Tibial artery (tissue), 4 donors: ENCODE measurements at regions of chr9 and their contacts with region 1.

Region 1: GRCh38 chr9:113993838-113994540 is 84.1 kb downstream of the AMBP start:
- DNase-seq: peak; percentile 88 to 96
- H3K4me3 ChIP-seq: no peak overlapping the region
- H3K27ac ChIP-seq: peak overlapping the region in 1 of 2 donors; percentile 21
- H3K4me1 ChIP-seq: peaks cover 3 to 79% (median 53%) of the 10 kb centered on the region in 4 donors
- H3K27me3 ChIP-seq: no peaks in the 10 kb centered on the region
- CTCF ChIP-seq: no peak

Region 2: GRCh38 chr9:113876151-113876992 is 117.6 kb before region 1 on chr9 and contains the start of gene ZNF618:
- intact Hi-C with region 1: loop called (anchors 10 kb)
- DNase-seq: peak in 1 of 2 donors; percentile 71
- H3K4me3 ChIP-seq: peak within 1 kb of the TSS; percentile 87 to 96
- H3K27ac ChIP-seq: peak within 1 kb of the TSS; percentile 84 to 88
- H3K4me1 ChIP-seq: peaks cover 0 to 41% (median 14%) of the 10 kb centered on the region in 4 donors
- H3K27me3 ChIP-seq: no peaks in the 10 kb centered on the region
- CTCF ChIP-seq: peak; percentile 33 to 53

Region 3: GRCh38 chr9:114153761-114154599 is 160.0 kb after region 1 on chr9:
- intact Hi-C with region 1: no loop called
- DNase-seq: no peak
- H3K4me3 ChIP-seq: peak overlapping the region; percentile 3 to 72
- H3K27ac ChIP-seq: no peak overlapping the region
- H3K4me1 ChIP-seq: peaks cover 0 to 42% (median 33%) of the 10 kb centered on the region in 4 donors
- H3K27me3 ChIP-seq: peaks cover 0 to 41% of the 10 kb centered on the region in 2 donors
- CTCF ChIP-seq: peak in 1 of 2 experiments; percentile 26